Activated naive CD4-positive, alpha-beta T cell treated with anti-CD3 and anti-CD28 coated beads, Interleukin-2, amount 10 ng/mL, durations not matched to agents 7 days and 5 days (primary cell): ENCODE measurements at regions of chr10 and their contacts with region 1.

Region 1: DNA sequence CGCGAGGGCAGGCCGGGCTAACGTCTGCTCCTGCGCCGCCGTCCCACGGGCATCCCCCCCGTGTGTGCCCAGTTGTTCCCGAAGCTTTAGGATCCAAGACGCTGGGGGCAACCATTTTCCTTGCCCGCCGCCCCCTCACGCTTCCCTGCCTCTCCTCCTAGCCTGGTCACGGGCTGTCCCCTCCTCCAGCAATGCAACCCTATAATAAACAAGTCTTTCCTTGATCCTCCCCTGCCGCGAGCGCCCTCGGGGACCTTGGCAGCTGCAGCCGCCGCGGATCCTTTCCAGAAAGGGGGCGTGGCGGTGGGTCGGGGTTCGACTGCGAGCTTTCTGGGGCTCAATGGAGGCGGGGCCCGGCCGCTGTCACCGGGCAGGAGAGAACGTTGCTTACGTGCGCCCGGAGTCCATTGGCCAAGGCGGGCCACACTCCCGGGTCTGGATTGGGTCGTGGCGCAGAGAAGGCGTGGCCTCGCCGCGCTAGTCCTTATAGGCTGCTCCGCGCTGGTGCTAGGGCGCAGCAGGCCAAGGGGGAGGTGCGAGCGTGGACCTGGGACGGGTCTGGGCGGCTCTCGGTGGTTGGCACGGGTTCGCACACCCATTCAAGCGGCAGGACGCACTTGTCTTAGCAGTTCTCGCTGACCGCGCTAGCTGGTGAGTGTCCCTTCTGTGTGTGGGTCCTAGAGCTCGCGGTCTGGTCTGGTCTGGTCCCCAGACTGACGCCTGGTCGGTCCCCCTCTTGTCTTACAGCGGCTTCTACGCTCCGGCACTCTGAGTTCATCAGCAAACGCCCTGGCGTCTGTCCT is at the start of gene DDIT4:
- DNase-seq: peak; percentile 100
- H3K4me3 Mint-ChIP-seq: peak within 1 kb of the TSS; percentile 99
- H3K27ac Mint-ChIP-seq: peak within 1 kb of the TSS; percentile 96
- H3K4me1 Mint-ChIP-seq: peaks cover 61% of the 10 kb centered on the region
- H3K27me3 Mint-ChIP-seq: no peaks in the 10 kb centered on the region

Region 2: DNA sequence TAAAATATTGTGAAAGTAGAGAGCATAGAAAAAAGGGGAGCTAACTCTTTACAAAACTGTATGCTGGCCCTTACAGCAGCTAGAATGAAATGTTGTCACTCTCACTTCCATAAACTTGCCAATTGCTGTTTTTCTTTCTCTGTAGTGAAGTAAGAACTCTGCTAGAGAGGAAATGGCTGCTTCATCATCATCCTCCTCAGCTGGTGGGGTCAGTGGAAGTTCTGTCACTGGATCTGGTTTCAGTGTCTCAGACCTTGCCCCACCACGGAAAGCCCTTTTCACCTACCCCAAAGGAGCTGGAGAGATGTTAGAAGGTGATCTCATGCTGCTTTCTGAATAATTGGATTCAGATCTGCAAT is 49.9 kb before region 1 on chr10:
- CTCF ChIA-PET with region 1: interaction called, 11 read pairs
- DNase-seq: no peak
- H3K4me3 Mint-ChIP-seq: no peak overlapping the region
- H3K27ac Mint-ChIP-seq: peak overlapping the region; percentile 56
- H3K4me1 Mint-ChIP-seq: peaks cover 52% of the 10 kb centered on the region
- H3K27me3 Mint-ChIP-seq: no peaks in the 10 kb centered on the region

Region 3: DNA sequence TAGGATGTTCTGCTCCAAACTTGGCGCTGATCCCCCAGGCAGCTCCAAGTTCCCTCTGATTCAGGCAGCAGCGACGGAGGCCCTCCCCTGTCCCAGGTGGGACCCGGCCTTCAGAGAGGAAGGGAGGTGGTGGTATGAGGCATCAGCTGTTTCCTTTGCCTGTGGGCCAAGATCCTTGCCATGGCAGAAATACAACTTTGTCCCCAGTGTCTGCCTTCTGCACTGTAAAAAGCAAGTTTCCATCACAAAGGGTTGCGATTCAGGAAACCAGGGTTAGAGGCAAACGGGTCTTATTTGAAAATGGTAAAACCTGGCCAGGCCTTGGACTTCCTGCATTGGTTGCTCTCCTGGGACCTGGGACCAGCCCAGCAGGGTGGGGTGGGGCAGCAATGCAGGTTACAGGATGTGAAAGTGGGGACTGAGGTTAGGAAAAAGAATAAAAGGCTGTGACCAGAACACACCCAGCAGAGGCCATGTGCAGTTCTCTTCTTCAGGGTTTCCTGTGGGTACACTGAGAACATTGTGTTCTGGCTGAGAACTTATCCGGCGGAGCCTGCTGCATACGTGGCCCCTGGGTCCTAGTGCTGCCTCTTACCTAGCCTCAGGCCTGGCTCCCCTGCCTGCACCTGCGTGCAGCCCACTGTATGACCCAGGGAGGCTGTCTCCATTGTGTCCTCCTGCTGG is 25.0 kb before region 1 on chr10:
- CTCF ChIA-PET with region 1: interaction called, 13 read pairs
- DNase-seq: peak; percentile 86
- H3K4me3 Mint-ChIP-seq: peak overlapping the region; percentile 79
- H3K27ac Mint-ChIP-seq: peak overlapping the region; percentile 99
- H3K4me1 Mint-ChIP-seq: peaks cover 86% of the 10 kb centered on the region
- H3K27me3 Mint-ChIP-seq: no peaks in the 10 kb centered on the region

Region 4: GRCh38 chr10:72260588-72261322 is 12.9 kb before region 1 on chr10:
- CTCF ChIA-PET with region 1: interaction called, 31 read pairs
- DNase-seq: peak; percentile 92
- H3K4me3 Mint-ChIP-seq: peak overlapping the region; percentile 73
- H3K27ac Mint-ChIP-seq: peak overlapping the region; percentile 97
- H3K4me1 Mint-ChIP-seq: peaks cover 77% of the 10 kb centered on the region
- H3K27me3 Mint-ChIP-seq: peaks cover 5% of the 10 kb centered on the region

Region 5: GRCh38 chr10:72292223-72292691 is 18.6 kb after region 1 on chr10:
- CTCF ChIA-PET with region 1: interaction called, 19 read pairs
- DNase-seq: peak; percentile 52
- H3K4me3 Mint-ChIP-seq: peak overlapping the region; percentile 24
- H3K27ac Mint-ChIP-seq: peak overlapping the region; percentile 75
- H3K4me1 Mint-ChIP-seq: peaks cover 78% of the 10 kb centered on the region
- H3K27me3 Mint-ChIP-seq: no peaks in the 10 kb centered on the region

Region 6: GRCh38 chr10:72319416-72320254 is 46.0 kb after region 1 on chr10:
- CTCF ChIA-PET with region 1: interaction called, 28 read pairs
- DNase-seq: peak; percentile 92
- H3K4me3 Mint-ChIP-seq: peak overlapping the region; percentile 75
- H3K27ac Mint-ChIP-seq: peak overlapping the region; percentile 99
- H3K4me1 Mint-ChIP-seq: peaks cover 93% of the 10 kb centered on the region
- H3K27me3 Mint-ChIP-seq: no peaks in the 10 kb centered on the region

Region 7: DNA sequence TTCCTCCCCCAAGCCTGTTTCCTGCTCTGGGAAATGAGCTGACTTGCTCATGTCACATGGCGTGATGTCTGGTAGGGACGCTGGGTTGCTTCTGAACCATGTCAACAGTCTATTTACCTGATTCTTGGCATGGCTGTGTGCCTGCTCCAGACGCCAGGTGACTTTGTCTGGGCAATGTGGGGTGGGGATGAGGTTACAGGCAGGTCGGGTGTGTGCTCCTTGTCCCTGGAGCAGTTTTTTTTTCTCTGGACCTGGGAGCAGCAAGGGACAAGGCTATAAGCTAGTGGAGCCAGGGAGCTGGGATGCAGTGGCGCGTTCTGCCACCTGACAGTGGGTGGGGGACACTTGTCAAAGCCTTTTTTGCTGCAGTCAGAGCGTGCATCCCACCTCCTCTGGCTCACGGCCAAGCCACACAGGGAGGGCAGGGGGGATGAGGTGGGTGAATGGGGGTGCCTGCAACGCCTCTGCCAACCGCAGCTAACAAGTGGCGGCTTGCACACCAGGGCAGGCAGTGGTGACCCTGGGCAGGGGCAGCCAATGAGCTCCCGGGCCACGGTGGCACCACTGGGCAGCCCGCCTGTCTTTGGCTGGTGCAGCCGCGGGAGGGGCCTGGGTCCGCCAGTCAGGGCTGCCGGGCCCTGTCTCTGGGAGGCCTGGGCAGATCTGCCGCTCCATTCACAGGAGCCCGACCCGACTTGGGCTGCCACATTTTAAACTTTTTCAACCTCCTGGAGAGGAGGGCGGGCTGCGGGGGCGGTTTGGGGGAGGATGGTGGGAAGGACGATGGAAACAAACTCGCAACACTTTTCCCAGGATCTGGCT is 58.2 kb after region 1 on chr10:
- CTCF ChIA-PET with region 1: interaction called, 101 read pairs
- DNase-seq: peak; percentile 94
- H3K4me3 Mint-ChIP-seq: peak overlapping the region; percentile 79
- H3K27ac Mint-ChIP-seq: peak overlapping the region; percentile 98
- H3K4me1 Mint-ChIP-seq: peaks cover 96% of the 10 kb centered on the region
- H3K27me3 Mint-ChIP-seq: no peaks in the 10 kb centered on the region

Region 8: DNA sequence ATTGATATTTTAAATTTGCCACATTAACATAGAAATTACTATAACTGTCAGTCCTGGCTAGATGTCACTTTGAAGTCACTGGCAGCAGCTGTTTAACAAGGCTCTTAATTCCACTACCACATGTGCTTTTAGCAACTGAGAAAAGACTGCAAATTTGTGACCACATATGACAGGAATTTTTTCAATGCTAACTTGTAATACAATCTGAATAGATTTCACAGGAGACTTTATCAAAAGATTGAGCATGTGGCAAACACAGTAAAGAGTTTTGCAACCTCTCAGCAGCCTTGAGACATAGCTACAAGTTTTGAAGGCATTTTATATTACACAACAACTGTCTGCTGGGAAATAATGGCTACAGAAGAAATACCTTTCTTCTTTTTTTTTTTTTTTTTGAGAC is 279.2 kb after region 1 on chr10:
- CTCF ChIA-PET with region 1: no interaction called
- DNase-seq: no peak
- H3K4me3 Mint-ChIP-seq: no peak overlapping the region
- H3K27ac Mint-ChIP-seq: no peak overlapping the region
- H3K4me1 Mint-ChIP-seq: no peaks in the 10 kb centered on the region
- H3K27me3 Mint-ChIP-seq: no peaks in the 10 kb centered on the region

Region 9: DNA sequence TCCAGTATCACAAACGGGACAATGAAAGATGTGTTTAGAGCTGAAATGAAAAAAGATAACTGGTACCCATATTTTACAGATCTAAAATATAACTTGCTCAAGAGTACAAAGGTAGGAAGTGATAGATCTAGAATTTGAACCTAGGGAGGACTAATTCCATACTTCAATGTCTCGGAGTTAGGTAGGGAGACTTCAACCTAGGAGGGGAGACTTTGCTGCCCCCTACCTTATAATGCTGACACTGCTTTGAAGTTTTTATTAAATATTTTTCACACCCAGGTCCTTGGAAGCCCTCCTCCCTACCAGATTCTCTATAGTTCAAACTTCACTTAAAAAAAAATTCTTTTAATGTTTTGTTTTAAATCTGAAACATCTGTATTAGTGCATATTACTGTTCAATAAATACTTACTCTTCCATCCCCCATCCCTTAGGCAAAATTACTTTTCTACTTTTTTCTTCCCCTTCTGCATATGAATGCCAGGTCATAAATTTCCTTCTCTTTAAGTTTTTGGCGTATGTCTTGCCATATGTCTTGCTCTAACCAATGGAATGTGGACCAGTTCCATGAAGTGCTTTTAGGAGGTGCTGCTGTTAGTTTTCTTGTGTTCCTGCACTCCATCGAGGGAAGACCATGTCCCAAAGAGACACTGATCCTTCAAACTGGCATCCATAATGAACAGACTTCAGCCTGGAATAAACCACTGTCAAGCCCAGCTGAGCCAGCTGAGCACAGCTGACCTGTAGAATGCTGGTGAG is 294.5 kb after region 1 on chr10:
- CTCF ChIA-PET with region 1: no interaction called
- DNase-seq: no peak
- H3K4me3 Mint-ChIP-seq: no peak overlapping the region
- H3K27ac Mint-ChIP-seq: no peak overlapping the region
- H3K4me1 Mint-ChIP-seq: peaks cover 15% of the 10 kb centered on the region
- H3K27me3 Mint-ChIP-seq: no peaks in the 10 kb centered on the region

Region 10: DNA sequence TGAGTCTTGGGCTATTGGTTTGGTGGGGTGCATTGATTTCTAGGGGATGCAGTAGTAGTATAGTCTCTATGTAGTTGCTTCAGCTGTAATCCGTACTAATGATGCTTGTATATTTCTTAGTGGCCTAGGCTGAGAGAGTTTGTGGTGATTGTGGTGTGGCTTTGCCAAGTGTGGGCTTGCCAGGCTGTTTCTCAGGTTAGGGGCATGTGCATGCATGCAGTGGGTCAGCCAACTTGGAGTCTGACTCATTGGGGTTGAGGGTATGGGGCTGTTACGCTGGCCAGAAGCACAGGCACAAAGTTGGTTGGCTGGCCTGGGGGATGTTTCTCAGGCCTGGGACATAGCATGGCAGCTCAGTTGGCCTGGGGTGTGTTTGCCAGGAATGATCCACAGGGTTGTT is 706.7 kb after region 1 on chr10:
- CTCF ChIA-PET with region 1: no interaction called
- DNase-seq: no peak
- H3K4me3 Mint-ChIP-seq: no peak overlapping the region
- H3K27ac Mint-ChIP-seq: no peak overlapping the region
- H3K4me1 Mint-ChIP-seq: no peaks in the 10 kb centered on the region
- H3K27me3 Mint-ChIP-seq: peaks cover 5% of the 10 kb centered on the region